Activated CD4-positive, alpha-beta T cell treated with anti-CD3 and anti-CD28 coated beads, Interleukin-2, amount 10 ng/mL, durations not matched to agents 24 days and 14 days (primary cell): ENCODE measurements at regions of chrX and their contacts with region 1.

Region 1: GRCh38 chrX:132001127-132001526 is 22.0 kb upstream of the STK26 start:
- DNase-seq: no peak
- H3K4me3 Mint-ChIP-seq: no peak overlapping the region
- H3K27ac Mint-ChIP-seq: no peak overlapping the region
- H3K4me1 Mint-ChIP-seq: peaks cover 16% of the 10 kb centered on the region
- H3K27me3 Mint-ChIP-seq: no peaks in the 10 kb centered on the region

Region 2: GRCh38 chrX:131987252-131987651 is 13.9 kb before region 1 on chrX:
- intact Hi-C with region 1: loop called (anchors 2 kb)
- DNase-seq: peak; percentile 73
- H3K4me3 Mint-ChIP-seq: peak overlapping the region; percentile 70
- H3K27ac Mint-ChIP-seq: peak overlapping the region; percentile 96
- H3K4me1 Mint-ChIP-seq: peaks cover 25% of the 10 kb centered on the region
- H3K27me3 Mint-ChIP-seq: no peaks in the 10 kb centered on the region

Region 3: DNA sequence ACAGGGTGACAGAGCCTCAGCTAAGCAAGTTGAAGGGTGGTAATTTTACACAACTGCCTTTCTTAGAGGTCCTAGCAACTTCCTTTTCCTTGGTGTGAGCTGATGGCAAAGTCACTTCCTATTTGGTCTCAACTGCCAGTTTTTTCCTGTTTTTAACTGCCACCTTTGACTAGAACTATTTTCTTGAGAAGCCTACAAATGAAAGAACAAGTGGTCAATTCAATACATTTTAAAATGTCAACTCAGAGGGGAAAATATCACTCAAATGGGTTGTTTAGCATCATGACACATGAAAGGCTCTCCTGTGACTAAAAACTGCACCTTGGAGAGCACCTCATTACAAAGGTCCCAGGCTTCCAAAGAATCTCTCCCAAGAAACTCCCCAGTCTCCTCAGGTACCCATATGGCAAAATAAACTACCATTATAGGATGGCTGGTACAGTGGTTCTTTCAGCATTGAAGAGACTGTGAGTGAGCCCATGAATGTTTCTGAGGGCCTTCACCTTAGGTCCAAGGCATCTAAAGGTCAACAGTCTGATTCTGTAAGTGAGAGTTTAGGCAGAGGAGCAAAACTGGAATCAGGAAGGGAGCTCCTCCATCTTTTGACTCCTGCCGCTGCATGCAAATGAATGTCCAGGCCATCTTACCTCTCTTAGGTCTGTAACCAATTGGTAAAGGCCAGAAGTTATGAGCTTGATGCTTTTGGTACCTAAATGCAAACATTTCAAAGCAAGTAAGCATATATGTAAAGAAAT is 16.5 kb after region 1 on chrX:
- intact Hi-C with region 1: loop called (anchors 2 kb)
- DNase-seq: no peak
- H3K4me3 Mint-ChIP-seq: peak overlapping the region; percentile 49
- H3K27ac Mint-ChIP-seq: peak overlapping the region; percentile 82
- H3K4me1 Mint-ChIP-seq: peaks cover 20% of the 10 kb centered on the region
- H3K27me3 Mint-ChIP-seq: no peaks in the 10 kb centered on the region